ENCODE measurements at regions of chr3 and their contacts with region 1.

Region 1: DNA sequence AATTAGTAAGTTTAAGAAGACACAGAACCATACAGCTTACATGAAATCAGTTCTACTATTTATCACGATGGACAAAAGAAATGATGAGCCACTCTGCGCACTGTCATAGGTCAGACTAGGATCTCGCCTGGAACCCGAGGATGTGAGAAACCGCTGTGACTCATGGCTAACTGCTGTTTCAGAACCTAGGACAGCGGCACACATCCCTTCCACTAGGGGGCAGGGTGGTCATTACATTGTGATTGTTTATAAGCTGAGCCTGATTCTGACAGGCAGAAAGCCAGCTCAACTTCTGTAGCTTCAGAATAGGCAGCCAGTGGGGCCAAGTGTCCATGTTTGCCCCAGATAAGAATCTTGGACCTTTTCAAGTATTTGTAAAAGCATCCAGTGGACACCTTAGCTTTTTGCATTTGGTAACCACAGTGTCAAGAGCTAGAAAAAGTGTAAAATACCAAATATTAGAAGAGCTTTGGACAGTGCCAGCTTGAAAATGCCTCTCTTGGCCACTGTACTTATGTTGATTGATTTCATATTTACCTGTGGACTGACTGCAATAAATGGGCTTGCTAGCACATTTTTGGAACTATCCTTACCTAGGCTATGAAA is 115.8 kb downstream of the KBTBD8 start:
- DNase-seq: peak; percentile 87
- H3K4me3 Mint-ChIP-seq: no peak overlapping the region
- H3K27ac Mint-ChIP-seq: no peak overlapping the region
- H3K4me1 Mint-ChIP-seq: no peaks in the 10 kb centered on the region
- H3K27me3 Mint-ChIP-seq: peaks cover 5% of the 10 kb centered on the region

Region 2: DNA sequence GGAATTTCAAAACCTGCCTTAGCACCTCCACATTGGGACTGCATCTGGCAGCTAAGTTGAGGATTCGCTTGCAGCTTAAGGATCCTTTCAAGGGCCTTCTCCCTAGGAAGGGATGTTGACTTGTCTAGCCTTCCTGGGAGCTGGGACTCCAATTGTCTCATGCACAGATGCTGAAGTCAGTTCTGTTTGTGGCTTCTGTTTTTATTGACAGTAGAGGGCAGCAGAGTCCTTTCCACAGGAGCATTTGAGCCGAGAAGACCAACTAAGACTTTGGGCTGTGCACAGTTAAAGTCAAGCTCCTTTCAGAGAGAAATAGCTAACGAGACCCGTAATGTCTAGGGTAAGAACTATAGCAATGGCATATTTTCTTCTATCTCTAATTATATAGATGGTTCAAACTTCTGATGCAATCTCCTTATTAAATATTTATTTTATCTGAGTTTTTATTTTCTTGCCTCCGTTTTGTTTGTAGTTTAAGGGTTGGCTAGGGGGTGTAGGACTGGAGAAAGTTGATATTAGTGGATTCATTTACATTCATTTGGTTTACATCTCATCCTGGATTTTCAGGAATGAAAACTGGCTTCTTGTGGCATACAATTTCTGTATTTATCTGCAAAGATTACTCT is 175.5 kb before region 1 on chr3:
- CTCF ChIA-PET with region 1: interaction called, 10 read pairs
- DNase-seq: peak; percentile 39
- H3K4me3 Mint-ChIP-seq: no peak overlapping the region
- H3K27ac Mint-ChIP-seq: no peak overlapping the region
- H3K4me1 Mint-ChIP-seq: no peaks in the 10 kb centered on the region
- H3K27me3 Mint-ChIP-seq: peaks cover 3% of the 10 kb centered on the region

Region 3: DNA sequence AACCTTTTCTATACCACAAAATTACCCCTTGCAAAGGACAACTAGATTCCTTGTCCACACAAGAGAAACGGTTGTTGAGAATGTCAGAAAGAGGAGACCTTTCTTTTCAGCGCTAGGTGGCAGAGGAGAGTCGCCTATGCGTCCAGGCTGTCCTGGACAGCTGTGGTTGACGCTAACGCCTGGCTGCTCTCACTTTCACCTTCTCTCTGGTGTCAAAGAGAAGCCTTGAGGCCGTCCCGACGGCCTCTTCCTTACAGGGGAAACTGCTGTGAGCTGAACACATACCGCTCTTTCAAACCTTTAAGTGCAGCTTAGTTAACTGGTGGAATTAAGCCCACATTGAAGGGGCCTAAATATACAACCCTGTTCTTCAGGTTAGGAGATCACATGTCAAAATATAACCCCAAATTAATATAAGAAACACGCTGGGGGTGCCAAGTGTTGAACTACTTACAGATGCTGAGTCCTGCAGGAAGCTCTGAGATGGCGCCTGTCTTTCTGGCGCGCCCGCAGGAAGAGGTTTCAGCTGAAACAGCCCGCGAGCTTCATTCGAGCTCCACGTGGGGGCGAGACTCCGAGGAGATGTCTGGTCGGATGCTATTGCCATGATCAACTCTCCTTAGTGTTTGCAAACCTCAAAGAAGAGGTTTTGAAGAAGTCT is 141.9 kb before region 1 on chr3:
- CTCF ChIA-PET with region 1: interaction called, 31 read pairs
- DNase-seq: peak; percentile 75
- H3K4me3 Mint-ChIP-seq: peak overlapping the region; percentile 55
- H3K27ac Mint-ChIP-seq: peak overlapping the region; percentile 80
- H3K4me1 Mint-ChIP-seq: peaks cover 19% of the 10 kb centered on the region
- H3K27me3 Mint-ChIP-seq: peaks cover 4% of the 10 kb centered on the region

Region 4: GRCh38 chr3:67357610-67358458 is 243.9 kb after region 1 on chr3:
- CTCF ChIA-PET with region 1: interaction called, 12 read pairs
- DNase-seq: no peak
- H3K4me3 Mint-ChIP-seq: no peak overlapping the region
- H3K27ac Mint-ChIP-seq: no peak overlapping the region
- H3K4me1 Mint-ChIP-seq: peaks cover 18% of the 10 kb centered on the region
- H3K27me3 Mint-ChIP-seq: no peaks in the 10 kb centered on the region

Region 5: GRCh38 chr3:67384760-67385397 is 271.0 kb after region 1 on chr3:
- CTCF ChIA-PET with region 1: interaction called, 18 read pairs
- DNase-seq: peak; percentile 64
- H3K4me3 Mint-ChIP-seq: no peak overlapping the region
- H3K27ac Mint-ChIP-seq: no peak overlapping the region
- H3K4me1 Mint-ChIP-seq: no peaks in the 10 kb centered on the region
- H3K27me3 Mint-ChIP-seq: no peaks in the 10 kb centered on the region

Region 6: GRCh38 chr3:67790043-67790442 is 676.1 kb after region 1 on chr3:
- CTCF ChIA-PET with region 1: interaction called, 17 read pairs
- DNase-seq: peak; percentile 71
- H3K4me3 Mint-ChIP-seq: no peak overlapping the region
- H3K27ac Mint-ChIP-seq: no peak overlapping the region
- H3K4me1 Mint-ChIP-seq: peaks cover 14% of the 10 kb centered on the region
- H3K27me3 Mint-ChIP-seq: no peaks in the 10 kb centered on the region

Region 7: DNA sequence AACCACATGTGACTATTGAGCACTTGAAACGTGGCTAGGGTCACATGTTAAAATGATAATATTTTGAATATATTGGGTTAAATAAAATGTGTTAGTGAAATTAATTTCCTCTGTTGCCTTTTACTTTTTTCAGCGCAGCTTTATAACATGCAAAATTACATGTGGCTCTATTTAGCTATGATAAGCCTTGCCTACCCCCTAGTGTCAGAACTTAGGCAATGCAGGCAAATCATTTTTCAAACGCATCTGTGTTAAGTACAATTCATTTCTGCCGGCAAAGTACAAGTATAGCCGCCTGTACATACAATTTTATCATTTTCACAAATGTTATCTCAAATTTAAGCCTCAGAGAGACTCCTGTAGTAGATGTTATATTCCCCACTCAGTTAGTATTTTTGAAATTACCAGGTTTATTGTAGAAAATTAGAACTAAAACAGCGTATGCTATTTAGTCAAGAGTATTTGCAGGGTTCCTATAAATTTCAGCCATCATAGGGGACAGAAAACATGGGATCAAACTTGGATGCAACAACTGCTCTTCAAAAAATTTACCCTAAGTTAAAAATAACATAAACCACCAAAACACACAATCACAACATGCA is 1762.3 kb after region 1 on chr3:
- CTCF ChIA-PET with region 1: interaction called, 13 read pairs
- DNase-seq: peak; percentile 35
- H3K4me3 Mint-ChIP-seq: no peak overlapping the region
- H3K27ac Mint-ChIP-seq: no peak overlapping the region
- H3K4me1 Mint-ChIP-seq: no peaks in the 10 kb centered on the region
- H3K27me3 Mint-ChIP-seq: peaks cover 8% of the 10 kb centered on the region